ENCODE measurements at regions of chr13 and their contacts with region 1.

Region 1: DNA sequence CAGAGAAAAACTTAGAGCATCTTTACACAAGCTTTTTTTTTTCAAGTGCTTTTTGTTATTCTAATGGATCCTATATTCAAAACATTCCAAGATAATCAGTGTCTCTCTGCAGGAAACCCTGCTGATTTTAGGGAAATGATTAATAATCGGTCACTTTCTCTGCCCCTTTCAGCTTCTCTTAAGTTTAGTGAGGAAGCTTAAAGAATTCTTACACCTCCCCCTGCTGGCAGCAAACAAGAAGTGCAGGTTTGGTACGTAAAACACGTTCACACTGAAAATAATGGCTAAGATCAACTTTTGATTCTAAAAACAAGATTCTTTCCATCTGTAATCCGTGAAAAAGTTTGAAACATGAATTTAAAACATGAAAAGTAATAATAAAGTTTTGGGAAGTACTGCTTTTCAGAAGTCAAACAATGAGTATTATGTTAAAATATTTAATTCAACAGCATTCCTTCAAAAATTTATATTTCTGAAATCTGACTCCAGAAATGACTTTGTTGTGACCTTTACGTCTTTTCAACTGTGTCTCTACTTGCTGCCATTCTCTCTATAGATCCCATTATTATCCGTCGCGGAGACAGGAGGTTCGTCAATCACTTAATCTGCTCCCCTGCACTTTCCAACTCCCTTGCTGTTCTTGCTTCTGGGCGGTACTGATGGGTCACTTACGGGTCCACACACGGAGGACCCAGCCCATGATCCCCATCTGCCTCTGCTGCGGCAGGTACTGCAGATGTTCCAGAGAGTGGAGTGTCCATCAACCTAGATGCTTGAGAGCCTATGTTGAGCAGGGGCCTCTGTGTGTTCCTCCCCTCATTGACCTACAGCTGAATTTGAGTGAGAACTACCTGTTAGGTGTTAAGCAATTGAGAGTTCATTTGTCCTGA is 203.1 kb upstream of the EDNRB start:
- DNase-seq: peak in 2 of 3 donors; percentile 35 to 72
- ATAC-seq: peak; percentile 40 to 65
- H3K4me3 ChIP-seq: no peak overlapping the region
- H3K27ac ChIP-seq: no peak overlapping the region
- H3K4me1 ChIP-seq: no peaks in the 10 kb centered on the region
- H3K27me3 ChIP-seq: no peaks in the 10 kb centered on the region

Region 2: GRCh38 chr13:77779552-77780272 is 342.0 kb before region 1 on chr13:
- intact Hi-C with region 1: loop called (anchors 2 to 5 kb)
- DNase-seq: no peak
- ATAC-seq: peak; percentile 64 to 76
- H3K4me3 ChIP-seq: no peak overlapping the region
- H3K27ac ChIP-seq: no peak overlapping the region
- H3K4me1 ChIP-seq: no peaks in the 10 kb centered on the region
- H3K27me3 ChIP-seq: no peaks in the 10 kb centered on the region

Region 3: DNA sequence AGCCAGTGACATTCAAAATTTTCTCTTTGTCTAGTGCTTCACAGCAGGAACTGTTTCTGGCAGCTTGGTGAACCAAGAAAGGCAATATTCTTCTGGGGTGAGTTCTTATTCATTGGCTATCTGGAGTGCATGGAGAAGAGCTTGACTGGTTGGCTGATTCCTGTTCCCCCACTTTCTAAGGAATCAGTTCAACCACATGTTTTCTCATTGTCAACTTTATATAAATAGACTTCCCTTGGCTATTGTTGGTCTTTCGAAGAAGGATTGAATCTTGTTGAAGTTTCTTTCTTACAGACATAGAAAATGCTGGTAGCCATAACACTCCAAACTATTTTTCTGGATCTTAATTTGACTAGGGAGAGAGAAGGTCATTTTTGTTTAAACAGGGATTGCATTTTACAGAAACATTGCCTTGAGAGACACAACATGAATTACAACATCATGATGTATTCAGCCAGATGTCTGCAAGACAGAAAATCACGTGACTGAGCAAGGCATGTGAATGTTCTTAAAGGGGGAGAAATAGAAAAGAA is 288.3 kb before region 1 on chr13:
- intact Hi-C with region 1: no loop called
- DNase-seq: no peak
- ATAC-seq: peak; percentile 68 to 76
- H3K4me3 ChIP-seq: no peak overlapping the region
- H3K27ac ChIP-seq: peak overlapping the region; percentile 72
- H3K4me1 ChIP-seq: peaks cover 2% of the 10 kb centered on the region
- H3K27me3 ChIP-seq: no peaks in the 10 kb centered on the region

Region 4: GRCh38 chr13:77918391-77919245 is 203.1 kb before region 1 on chr13 and contains the start of gene EDNRB:
- intact Hi-C with region 1: loop called in 2 of 4 experiments (anchors 2 to 10 kb)
- DNase-seq: peak; percentile 74 to 85 (median 80)
- ATAC-seq: peak; percentile 81 to 85
- H3K4me3 ChIP-seq: peak within 1 kb of the TSS; percentile 85
- H3K27ac ChIP-seq: peak within 1 kb of the TSS; percentile 71
- H3K4me1 ChIP-seq: no peaks in the 10 kb centered on the region
- H3K27me3 ChIP-seq: no peaks in the 10 kb centered on the region
- total RNA-seq, gene EDNRB: 55.3 to 60.8 (median 58.1) TPM

Region 5: DNA sequence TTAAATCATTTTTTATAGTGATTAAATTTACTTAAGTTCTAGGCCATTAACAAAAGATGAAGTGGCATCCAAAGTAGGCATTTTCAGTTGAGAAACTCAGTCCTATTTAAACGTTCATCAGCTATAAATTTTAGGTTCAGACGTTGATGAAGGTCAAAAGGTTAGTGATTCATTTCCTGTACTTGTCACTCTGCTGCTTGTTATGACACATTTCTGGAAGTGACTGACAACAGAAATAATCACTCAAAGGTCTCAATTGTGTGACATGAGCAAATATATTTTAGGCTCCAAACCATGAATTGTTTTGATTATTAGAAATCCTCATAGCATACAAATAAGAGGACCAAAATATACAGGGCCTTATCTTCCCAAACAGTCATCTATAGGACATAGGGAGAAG is 192.8 kb before region 1 on chr13:
- intact Hi-C with region 1: loop called in 1 of 4 experiments (anchors 10 kb)
- DNase-seq: no peak
- ATAC-seq: no peak
- H3K4me3 ChIP-seq: no peak overlapping the region
- H3K27ac ChIP-seq: no peak overlapping the region
- H3K4me1 ChIP-seq: no peaks in the 10 kb centered on the region
- H3K27me3 ChIP-seq: no peaks in the 10 kb centered on the region